Activated CD4-positive, alpha-beta T cell treated with anti-CD3 and anti-CD28 coated beads, Interleukin-2, amount 10 ng/mL, durations not matched to agents 24 days and 14 days (primary cell): ENCODE measurements at regions of chr10 and their contacts with region 1.

Region 1: DNA sequence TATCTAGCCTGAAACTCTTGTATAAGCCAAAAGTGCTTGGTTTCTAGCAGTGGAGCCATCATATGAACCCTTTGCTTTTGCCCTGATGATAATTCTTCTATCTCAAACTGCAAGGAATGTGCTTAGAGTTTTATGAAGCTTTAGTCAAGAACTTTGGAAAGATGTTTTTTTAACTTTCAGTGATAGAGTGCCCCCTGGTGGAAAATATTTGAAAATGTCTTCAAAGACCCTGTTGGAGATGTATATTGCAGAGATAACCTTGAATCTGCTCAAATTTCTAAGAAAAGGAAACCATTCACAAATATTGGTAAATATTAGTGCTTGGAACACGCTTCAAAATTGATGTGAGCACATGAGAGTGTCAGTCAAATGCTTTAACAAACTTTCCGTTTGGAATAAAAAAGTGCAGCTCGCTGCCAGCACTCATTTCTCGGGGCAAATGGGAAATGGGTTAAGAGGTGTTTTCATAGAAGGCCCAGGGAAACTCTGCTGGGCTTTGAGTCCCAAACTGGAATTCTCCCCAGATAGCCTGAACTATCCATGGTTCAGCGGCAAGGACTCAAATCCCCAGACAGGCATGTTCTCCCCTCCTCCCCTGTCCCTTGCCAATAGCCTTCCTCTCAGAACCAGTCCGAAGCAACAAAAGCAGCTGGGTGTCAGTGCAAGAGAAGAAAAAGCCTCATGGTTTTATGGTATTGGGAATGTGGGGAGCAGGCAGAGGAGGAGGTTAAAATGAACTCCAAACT is 129.3 kb downstream of the MYOF start:
- DNase-seq: peak; percentile 63
- H3K4me3 Mint-ChIP-seq: no peak overlapping the region
- H3K27ac Mint-ChIP-seq: no peak overlapping the region
- H3K4me1 Mint-ChIP-seq: peaks cover 3% of the 10 kb centered on the region
- H3K27me3 Mint-ChIP-seq: no peaks in the 10 kb centered on the region

Region 2: DNA sequence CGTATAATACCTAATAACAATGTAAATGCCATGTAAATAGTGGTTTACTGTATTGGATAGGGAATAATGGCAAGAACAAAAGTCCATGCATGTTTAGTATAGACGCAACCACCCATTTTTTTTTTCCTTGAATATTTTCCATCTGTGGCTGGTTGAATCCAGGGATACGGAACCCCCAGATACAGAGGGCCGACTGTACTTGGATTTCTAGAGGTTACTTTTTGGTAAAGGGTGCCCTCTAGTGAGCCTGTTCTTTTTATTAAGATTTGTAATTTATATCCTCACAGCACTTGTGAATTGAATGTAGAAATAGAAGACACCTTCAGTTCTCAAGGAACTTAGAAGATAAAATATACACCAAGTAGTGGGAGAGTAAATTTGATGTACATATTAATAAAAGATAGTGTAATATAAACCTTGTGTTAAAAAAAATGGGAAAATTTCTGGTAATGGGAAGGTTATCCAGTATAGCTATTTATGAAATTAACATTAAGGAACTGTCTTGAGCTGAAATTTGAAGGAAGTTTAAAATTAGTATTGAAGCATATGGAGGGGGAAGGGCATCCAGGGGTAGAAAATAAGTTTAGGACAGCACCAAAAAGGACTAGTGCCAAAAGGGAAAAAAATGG is 472.5 kb before region 1 on chr10:
- intact Hi-C with region 1: loop called (anchors 10 kb)
- DNase-seq: peak; percentile 63
- H3K4me3 Mint-ChIP-seq: no peak overlapping the region
- H3K27ac Mint-ChIP-seq: no peak overlapping the region
- H3K4me1 Mint-ChIP-seq: peaks cover 8% of the 10 kb centered on the region
- H3K27me3 Mint-ChIP-seq: peaks cover 3% of the 10 kb centered on the region

Region 3: DNA sequence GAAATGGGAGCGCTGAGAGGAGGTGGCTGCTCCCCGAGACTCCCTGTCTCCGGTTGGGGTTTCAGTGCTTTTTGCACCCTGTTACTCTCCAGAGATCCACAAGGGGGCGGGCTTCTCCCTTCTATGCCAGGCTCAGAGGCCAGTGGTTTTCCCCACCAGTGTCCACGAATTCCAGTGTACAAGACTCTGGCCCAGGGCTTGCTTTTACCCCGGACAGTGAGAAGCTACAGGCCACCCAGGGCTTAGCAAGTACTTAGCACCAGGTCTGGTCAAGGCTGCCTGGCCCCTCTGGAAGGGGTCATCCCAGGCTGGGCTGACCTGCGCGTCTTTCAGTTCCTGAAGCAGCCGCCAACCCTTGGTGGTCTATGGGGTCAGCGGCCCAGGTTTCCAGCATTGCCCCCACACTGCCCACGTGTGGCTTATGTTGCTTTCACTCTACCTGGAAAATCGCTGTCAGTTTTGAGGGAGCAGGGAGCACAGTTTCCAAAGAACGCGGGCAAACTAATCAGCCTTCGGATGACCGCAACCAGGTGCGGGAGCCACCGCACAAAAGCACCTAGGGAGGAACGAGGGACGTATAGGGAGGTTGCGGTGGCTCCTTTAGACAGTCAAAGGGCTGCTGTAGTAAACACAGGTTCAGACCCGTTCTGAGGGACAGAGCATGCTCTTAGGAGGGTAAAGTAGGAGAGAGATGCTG is 272.3 kb before region 1 on chr10:
- intact Hi-C with region 1: loop called (anchors 2 kb)
- DNase-seq: peak; percentile 83
- H3K4me3 Mint-ChIP-seq: no peak overlapping the region
- H3K27ac Mint-ChIP-seq: no peak overlapping the region
- H3K4me1 Mint-ChIP-seq: peaks cover 7% of the 10 kb centered on the region
- H3K27me3 Mint-ChIP-seq: peaks cover 41% of the 10 kb centered on the region

Region 4: DNA sequence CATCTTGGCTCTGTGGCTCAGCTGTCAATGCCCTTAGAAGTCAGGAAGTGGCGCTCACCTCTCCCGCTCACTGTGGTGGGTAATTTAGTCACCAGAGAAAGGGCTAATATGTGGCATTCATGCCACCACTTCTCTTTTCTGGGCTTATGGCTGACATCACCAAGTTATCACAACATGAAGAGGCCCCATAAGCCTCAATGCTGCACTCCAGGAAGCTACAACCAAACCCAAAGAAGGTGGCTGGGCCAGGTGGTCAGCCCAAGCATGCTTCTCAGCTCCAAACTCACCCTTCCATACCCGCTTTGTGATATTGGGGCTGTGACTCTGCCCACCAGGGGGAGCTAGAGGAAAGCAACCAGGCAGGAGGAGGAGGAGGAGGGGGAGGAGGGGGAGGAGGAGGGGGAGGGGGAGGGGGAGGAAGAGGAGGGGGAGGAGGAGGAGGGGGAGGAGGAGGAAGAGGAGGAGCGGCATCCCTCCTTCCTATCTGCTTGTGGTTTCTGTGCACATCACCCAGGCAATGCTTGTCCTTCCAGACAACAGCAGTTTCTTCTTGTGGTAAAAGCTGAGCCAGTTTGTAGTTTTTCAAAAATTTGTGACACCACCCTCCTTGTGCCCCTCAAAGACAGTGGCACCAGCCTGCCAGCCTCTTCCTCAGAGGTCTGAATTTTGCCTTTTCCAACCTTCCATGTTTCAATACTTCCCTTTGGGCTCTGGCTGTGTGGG is 237.0 kb before region 1 on chr10:
- intact Hi-C with region 1: loop called (anchors 5 kb)
- DNase-seq: peak; percentile 88
- H3K4me3 Mint-ChIP-seq: no peak overlapping the region
- H3K27ac Mint-ChIP-seq: no peak overlapping the region
- H3K4me1 Mint-ChIP-seq: peaks cover 2% of the 10 kb centered on the region
- H3K27me3 Mint-ChIP-seq: peaks cover 18% of the 10 kb centered on the region